Mucosa of descending colon (tissue), 3 donors: ENCODE measurements at regions of chr16 and their contacts with region 1.

Region 1: DNA sequence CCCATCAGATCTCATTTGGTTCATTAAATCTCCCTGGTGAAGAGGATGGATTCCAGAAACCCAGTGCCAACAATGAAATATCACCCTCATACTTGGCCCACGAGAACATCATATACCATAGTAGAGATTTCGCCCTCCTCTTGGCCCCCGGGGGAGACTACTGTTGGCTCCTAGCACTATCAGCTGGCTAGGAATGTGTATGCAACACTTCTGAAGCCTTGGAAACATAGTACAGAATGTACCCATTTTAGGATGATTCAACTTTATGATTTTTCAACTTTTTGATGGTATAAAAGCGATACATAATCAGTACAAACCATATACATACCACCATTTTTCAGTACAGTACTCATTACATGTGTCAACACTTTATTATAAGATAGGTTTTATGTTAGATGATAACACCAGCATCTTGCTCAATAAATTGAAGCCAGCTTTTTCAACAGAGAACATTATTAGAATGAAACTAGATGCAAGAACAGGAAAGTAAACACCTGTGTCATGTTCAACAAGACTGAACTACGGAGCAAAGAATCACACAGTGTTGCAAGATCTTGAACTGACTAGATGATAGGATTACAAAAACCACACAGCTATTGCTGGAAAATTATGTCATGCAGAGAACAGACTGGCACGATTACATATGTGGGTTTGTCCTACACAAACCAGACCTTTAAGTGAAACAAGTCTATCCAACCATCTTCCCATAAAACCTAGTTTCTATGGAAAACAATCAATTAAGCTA is 17.2 kb downstream of the RSL1D1 start:
- DNase-seq: no peak
- ATAC-seq: no peak
- H3K4me3 ChIP-seq: no peak overlapping the region
- H3K4me1 ChIP-seq: no peaks in the 10 kb centered on the region
- CTCF ChIP-seq: no peak

Region 2: GRCh38 chr16:11396241-11397048 is 437.7 kb before region 1 on chr16:
- intact Hi-C with region 1: loop called in 1 of 2 experiments (anchors 10 kb)
- DNase-seq: peak in 2 of 3 donors; percentile 71 to 75
- ATAC-seq: peak; percentile 84
- H3K4me3 ChIP-seq: no peak overlapping the region
- H3K4me1 ChIP-seq: no peaks in the 10 kb centered on the region
- CTCF ChIP-seq: peak; percentile 97

Region 3: GRCh38 chr16:11526655-11527350 is 307.3 kb before region 1 on chr16:
- intact Hi-C with region 1: loop called in 1 of 2 experiments (anchors 10 kb)
- DNase-seq: no peak
- ATAC-seq: no peak
- H3K4me3 ChIP-seq: no peak overlapping the region
- H3K4me1 ChIP-seq: no peaks in the 10 kb centered on the region
- CTCF ChIP-seq: no peak

Region 4: GRCh38 chr16:11698271-11698689 is 135.8 kb before region 1 on chr16:
- intact Hi-C with region 1: no loop called
- DNase-seq: no peak
- ATAC-seq: peak; percentile 49
- H3K4me3 ChIP-seq: no peak overlapping the region
- H3K4me1 ChIP-seq: no peaks in the 10 kb centered on the region
- CTCF ChIP-seq: no peak

Region 5: GRCh38 chr16:11715246-11715947 is 118.7 kb before region 1 on chr16:
- intact Hi-C with region 1: no loop called
- DNase-seq: no peak
- ATAC-seq: no peak
- H3K4me3 ChIP-seq: no peak overlapping the region
- H3K4me1 ChIP-seq: no peaks in the 10 kb centered on the region
- CTCF ChIP-seq: no peak